Activated CD4-positive, alpha-beta T cell treated with anti-CD3 and anti-CD28 coated beads, Interleukin-2, amount 10 ng/mL, durations not matched to agents 24 days and 14 days (primary cell): ENCODE measurements at regions of chr19 and their contacts with region 1.

Region 1: GRCh38 chr19:40791996-40792391 is 7.0 kb upstream of the EGLN2 start:
- DNase-seq: no peak
- H3K4me3 Mint-ChIP-seq: peak overlapping the region; percentile 26
- H3K27ac Mint-ChIP-seq: peak overlapping the region; percentile 84
- H3K4me1 Mint-ChIP-seq: peaks cover 18% of the 10 kb centered on the region
- H3K27me3 Mint-ChIP-seq: no peaks in the 10 kb centered on the region

Region 2: DNA sequence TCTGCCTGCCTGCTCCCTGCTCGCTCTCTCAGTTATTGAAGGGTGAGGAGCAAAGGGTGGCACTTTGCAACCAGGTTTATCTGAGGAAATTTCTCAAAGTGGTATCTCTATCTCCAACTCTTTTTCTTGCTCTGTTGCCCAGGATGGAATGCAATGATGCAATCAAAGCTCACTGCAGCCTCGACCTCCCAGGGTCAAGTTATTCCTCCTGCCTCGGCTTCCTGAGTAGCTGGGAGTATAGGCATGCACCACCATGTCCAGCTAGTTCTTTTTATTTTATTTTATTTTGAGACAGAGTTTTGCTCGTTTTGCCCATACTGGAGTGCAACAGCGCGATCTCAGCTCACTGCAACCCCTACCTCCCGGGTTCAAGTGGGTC is 46.6 kb before region 1 on chr19:
- intact Hi-C with region 1: no loop called
- DNase-seq: no peak
- H3K4me3 Mint-ChIP-seq: no peak overlapping the region
- H3K27ac Mint-ChIP-seq: no peak overlapping the region
- H3K4me1 Mint-ChIP-seq: peaks cover 19% of the 10 kb centered on the region
- H3K27me3 Mint-ChIP-seq: no peaks in the 10 kb centered on the region

Region 3: DNA sequence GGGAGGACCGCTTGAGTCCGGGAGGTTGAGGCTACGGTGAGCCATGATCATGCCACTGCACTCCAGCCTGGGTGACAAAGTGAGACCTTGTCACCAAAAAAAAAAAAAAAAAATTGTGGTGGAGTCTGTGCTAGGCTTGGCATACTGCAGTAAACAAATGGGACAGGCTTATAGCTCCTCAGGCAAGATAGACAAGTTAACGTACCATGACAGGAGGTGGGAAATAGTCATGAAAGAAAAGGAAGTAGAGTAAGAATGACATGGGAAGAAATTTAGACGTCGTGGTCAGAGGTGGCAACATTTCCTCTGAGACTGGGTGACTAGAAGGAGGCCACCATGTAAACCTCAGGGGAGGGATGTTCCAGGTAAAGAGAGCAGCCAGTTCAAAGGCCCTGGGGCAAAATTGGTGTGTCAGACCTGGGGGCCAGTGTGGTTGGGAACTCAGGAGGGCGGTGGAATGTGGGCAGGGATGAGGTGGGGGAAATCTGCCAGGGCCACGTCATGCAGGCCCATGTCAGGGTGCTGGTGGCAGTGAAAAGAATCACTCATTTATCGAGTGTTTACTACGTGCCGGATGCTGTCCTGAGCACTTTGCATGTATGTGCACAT is 35.4 kb before region 1 on chr19:
- intact Hi-C with region 1: loop called (anchors 1 kb)
- DNase-seq: no peak
- H3K4me3 Mint-ChIP-seq: peak overlapping the region; percentile 18
- H3K27ac Mint-ChIP-seq: peak overlapping the region; percentile 58
- H3K4me1 Mint-ChIP-seq: peaks cover 40% of the 10 kb centered on the region
- H3K27me3 Mint-ChIP-seq: no peaks in the 10 kb centered on the region

Region 4: DNA sequence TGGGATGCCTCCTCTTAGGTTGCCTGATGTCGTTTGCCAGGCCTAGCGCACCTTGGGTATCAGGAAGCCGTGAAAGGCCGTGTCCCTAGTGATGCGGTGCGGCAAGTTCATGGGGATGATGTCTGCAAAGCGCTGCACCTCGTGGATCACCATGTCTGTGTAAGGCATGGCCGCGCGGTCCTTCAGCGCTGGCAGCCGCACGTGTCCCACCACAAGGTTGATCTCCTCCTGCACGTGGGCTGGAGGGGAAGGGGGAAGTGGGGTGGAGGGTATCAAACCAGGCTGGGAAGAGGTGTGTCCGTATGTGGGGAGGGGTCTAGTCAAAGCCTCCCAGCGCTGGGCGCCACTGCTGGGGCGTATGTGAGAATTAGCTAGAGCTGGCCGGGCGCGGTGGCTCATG is 30.2 kb after region 1 on chr19:
- intact Hi-C with region 1: no loop called
- DNase-seq: no peak
- H3K4me3 Mint-ChIP-seq: no peak overlapping the region
- H3K27ac Mint-ChIP-seq: no peak overlapping the region
- H3K4me1 Mint-ChIP-seq: peaks cover 31% of the 10 kb centered on the region
- H3K27me3 Mint-ChIP-seq: peaks cover 2% of the 10 kb centered on the region